ENCODE measurements at regions of chr7 and their contacts with region 1.

Region 1: GRCh38 chr7:19051767-19052375 is 65.6 kb downstream of the TWIST1 start:
- DNase-seq: peak; percentile 32 to 33
- H3K4me3 ChIP-seq: no peak overlapping the region
- H3K27ac ChIP-seq: no peak overlapping the region
- H3K4me1 ChIP-seq: peaks cover 7% of the 10 kb centered on the region; the same call in 1 of the 2 replicates
- H3K27me3 ChIP-seq: no peaks in the 10 kb centered on the region
- CTCF ChIP-seq: peak; percentile 97

Region 2: DNA sequence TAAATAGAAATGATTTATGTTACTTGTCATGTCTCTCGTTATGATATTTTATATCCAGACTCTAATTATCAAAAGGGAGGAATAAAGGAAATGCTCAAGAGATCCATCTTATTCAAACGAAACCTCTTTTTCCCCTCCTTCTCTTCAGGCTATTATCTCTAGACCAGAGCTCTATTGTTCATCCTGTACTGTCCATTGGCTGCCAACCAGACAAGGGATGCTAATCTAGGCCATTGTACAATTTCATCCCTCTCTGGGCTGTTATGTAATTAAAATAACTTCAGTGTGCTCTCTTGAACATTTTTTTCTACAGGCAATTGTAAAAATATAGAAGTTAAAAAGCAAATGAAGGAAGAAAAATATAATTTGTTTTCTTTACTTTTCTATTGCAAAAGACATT is 335.9 kb before region 1 on chr7:
- CTCF ChIA-PET with region 1: no interaction called
- POLR2A ChIA-PET with region 1: no interaction called
- intact Hi-C with region 1: loop called (anchors 10 kb)
- DNase-seq: no peak
- H3K4me3 ChIP-seq: no peak overlapping the region
- H3K27ac ChIP-seq: no peak overlapping the region
- H3K4me1 ChIP-seq: no peaks in the 10 kb centered on the region
- H3K27me3 ChIP-seq: no peaks in the 10 kb centered on the region
- CTCF ChIP-seq: no peak

Region 3: GRCh38 chr7:18770154-18770811 is 281.6 kb before region 1 on chr7:
- CTCF ChIA-PET with region 1: interaction called, 12 read pairs
- POLR2A ChIA-PET with region 1: no interaction called
- intact Hi-C with region 1: no loop called
- DNase-seq: no peak
- H3K4me3 ChIP-seq: no peak overlapping the region
- H3K27ac ChIP-seq: no peak overlapping the region
- H3K4me1 ChIP-seq: no peaks in the 10 kb centered on the region
- H3K27me3 ChIP-seq: no peaks in the 10 kb centered on the region
- CTCF ChIP-seq: no peak

Region 4: GRCh38 chr7:18798088-18798906 is 253.6 kb before region 1 on chr7:
- CTCF ChIA-PET with region 1: no interaction called
- POLR2A ChIA-PET with region 1: interaction called, 16 read pairs
- intact Hi-C with region 1: no loop called
- DNase-seq: no peak
- H3K4me3 ChIP-seq: no peak overlapping the region
- H3K27ac ChIP-seq: no peak overlapping the region
- H3K4me1 ChIP-seq: no peaks in the 10 kb centered on the region
- H3K27me3 ChIP-seq: no peaks in the 10 kb centered on the region
- CTCF ChIP-seq: no peak

Measured in PC-9 (cell line).